ENCODE measurements at regions of chr4 and their contacts with region 1.

Region 1: GRCh38 chr4:17511950-17512795 is at the start of gene QDPR:
- DNase-seq: peak; percentile 67
- ATAC-seq: peak; percentile 91
- H3K4me3 ChIP-seq: peak within 1 kb of the TSS; percentile 65 to 88 (median 84)
- H3K27ac ChIP-seq: peak within 1 kb of the TSS; percentile 73
- H3K4me1 ChIP-seq: peaks cover 71% of the 10 kb centered on the region
- H3K27me3 ChIP-seq: no peaks in the 10 kb centered on the region; a peak in 1 of 5 replicates
- CTCF ChIP-seq: peak; percentile 76
- EP300 ChIP-seq: peak in 1 of 2 experiments; percentile 37; a peak in 1 of 4 replicates
- POLR2A ChIP-seq: peak; percentile 24 to 73; a peak in 2 of 4 replicates
- RAD21 ChIP-seq: peak; percentile 60
- total RNA-seq, gene QDPR: 9.9 and 32.4 TPM in 2 replicates

Region 2: GRCh38 chr4:17490575-17491059 is 21.6 kb before region 1 on chr4:
- CTCF ChIA-PET with region 1: no interaction called
- POLR2A ChIA-PET with region 1: interaction called, 5 read pairs
- in situ Hi-C with region 1: no loop called
- intact Hi-C with region 1: loop called (anchors 1 kb)
- DNase-seq: peak; percentile 88
- ATAC-seq: peak; percentile 94
- H3K4me3 ChIP-seq: no peak overlapping the region
- H3K27ac ChIP-seq: peak overlapping the region; percentile 73
- H3K4me1 ChIP-seq: peaks cover 32% of the 10 kb centered on the region
- H3K27me3 ChIP-seq: no peaks in the 10 kb centered on the region
- CTCF ChIP-seq: no peak
- EP300 ChIP-seq: peak in 1 of 2 experiments; percentile 53; a peak in 1 of 4 replicates
- POLR2A ChIP-seq: no peak
- RAD21 ChIP-seq: no peak

Region 3: GRCh38 chr4:17497890-17498523 is 14.2 kb before region 1 on chr4:
- CTCF ChIA-PET with region 1: no interaction called
- POLR2A ChIA-PET with region 1: interaction called, 22 read pairs
- in situ Hi-C with region 1: no loop called
- intact Hi-C with region 1: no loop called
- DNase-seq: peak; percentile 75
- ATAC-seq: peak; percentile 74
- H3K4me3 ChIP-seq: no peak overlapping the region
- H3K27ac ChIP-seq: peak overlapping the region; percentile 43
- H3K4me1 ChIP-seq: peaks cover 21% of the 10 kb centered on the region
- H3K27me3 ChIP-seq: no peaks in the 10 kb centered on the region
- CTCF ChIP-seq: no peak
- EP300 ChIP-seq: peak in 1 of 2 experiments; percentile 55; a peak in 1 of 4 replicates
- POLR2A ChIP-seq: no peak
- RAD21 ChIP-seq: no peak

Region 4: DNA sequence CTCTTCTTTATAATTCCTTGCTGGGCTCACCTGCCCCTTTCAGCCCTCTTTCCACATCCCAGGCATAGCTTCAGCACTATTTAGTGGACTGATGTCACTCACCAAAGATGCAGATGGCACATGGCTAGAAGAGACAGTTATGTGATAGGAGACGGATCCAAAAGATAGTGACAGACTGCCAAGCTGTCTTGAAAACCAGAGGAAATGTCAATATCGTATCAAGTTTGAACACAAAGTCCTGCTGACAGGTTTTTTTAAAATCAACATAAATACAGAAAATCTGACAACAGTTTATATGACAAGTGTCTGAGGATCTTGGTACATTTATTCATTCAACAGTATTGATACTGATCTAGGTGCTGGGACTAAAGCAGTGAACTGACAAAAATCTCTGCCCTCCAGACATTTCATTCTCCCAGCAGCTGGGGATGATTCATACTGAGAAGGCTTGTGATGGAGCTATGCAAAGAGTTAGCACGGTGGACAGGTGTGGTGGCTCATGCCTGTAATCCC is 17.3 kb after region 1 on chr4:
- CTCF ChIA-PET with region 1: no interaction called
- POLR2A ChIA-PET with region 1: interaction called, 5 read pairs
- in situ Hi-C with region 1: no loop called
- intact Hi-C with region 1: loop called (anchors 1 kb)
- DNase-seq: no peak
- ATAC-seq: no peak
- H3K4me3 ChIP-seq: no peak overlapping the region
- H3K27ac ChIP-seq: no peak overlapping the region
- H3K4me1 ChIP-seq: peaks cover 42% of the 10 kb centered on the region
- H3K27me3 ChIP-seq: no peaks in the 10 kb centered on the region
- CTCF ChIP-seq: no peak
- EP300 ChIP-seq: no peak
- POLR2A ChIP-seq: no peak
- RAD21 ChIP-seq: no peak

Region 5: GRCh38 chr4:17535906-17536305 is 23.7 kb after region 1 on chr4:
- CTCF ChIA-PET with region 1: no interaction called
- POLR2A ChIA-PET with region 1: interaction called, 5 read pairs
- in situ Hi-C with region 1: no loop called
- intact Hi-C with region 1: loop called (anchors 2 kb)
- DNase-seq: peak; percentile 36
- ATAC-seq: peak; percentile 58
- H3K4me3 ChIP-seq: no peak overlapping the region
- H3K27ac ChIP-seq: no peak overlapping the region
- H3K4me1 ChIP-seq: peaks cover 32% of the 10 kb centered on the region
- H3K27me3 ChIP-seq: no peaks in the 10 kb centered on the region
- CTCF ChIP-seq: no peak
- EP300 ChIP-seq: no peak
- POLR2A ChIP-seq: no peak
- RAD21 ChIP-seq: no peak

Region 6: GRCh38 chr4:17636696-17637622 is 124.8 kb after region 1 on chr4:
- CTCF ChIA-PET with region 1: interaction called, 4 read pairs
- POLR2A ChIA-PET with region 1: no interaction called
- in situ Hi-C with region 1: no loop called
- intact Hi-C with region 1: loop called (anchors 10 kb)
- DNase-seq: peak; percentile 64
- ATAC-seq: peak; percentile 94
- H3K4me3 ChIP-seq: no peak overlapping the region
- H3K27ac ChIP-seq: no peak overlapping the region
- H3K4me1 ChIP-seq: peaks cover 9% of the 10 kb centered on the region; the same call in 1 of the 2 replicates
- H3K27me3 ChIP-seq: no peaks in the 10 kb centered on the region
- CTCF ChIP-seq: peak; percentile 89
- EP300 ChIP-seq: no peak
- POLR2A ChIP-seq: no peak
- RAD21 ChIP-seq: peak; percentile 91

Measured in HepG2 (cell line).